ENCODE measurements at regions of chr2 and their contacts with region 1.

Region 1: GRCh38 chr2:191869178-191869577 is 22.3 kb upstream of the CAVIN2 start:
- DNase-seq: peak; percentile 75 to 76
- H3K4me3 ChIP-seq: no peak overlapping the region
- H3K27ac ChIP-seq: no peak overlapping the region
- H3K4me1 ChIP-seq: peaks cover 0 to 4% (median 0%) of the 10 kb centered on the region in 4 experiments; a peak in 1 of 7 replicates
- H3K27me3 ChIP-seq: no peaks in the 10 kb centered on the region
- CTCF ChIP-seq: peak; percentile 74 to 93 (median 81)
- EP300 ChIP-seq: no peak
- POLR2A ChIP-seq: no peak
- RAD21 ChIP-seq: peak; percentile 93 to 94

Region 2: GRCh38 chr2:191441496-191442214 is 427.5 kb before region 1 on chr2:
- CTCF ChIA-PET with region 1: no interaction called
- POLR2A ChIA-PET with region 1: no interaction called
- DNase-seq: no peak
- H3K4me3 ChIP-seq: no peak overlapping the region
- H3K27ac ChIP-seq: no peak overlapping the region
- H3K4me1 ChIP-seq: no peaks in the 10 kb centered on the region
- H3K27me3 ChIP-seq: no peaks in the 10 kb centered on the region
- CTCF ChIP-seq: no peak
- EP300 ChIP-seq: no peak
- POLR2A ChIP-seq: no peak
- RAD21 ChIP-seq: no peak

Region 3: DNA sequence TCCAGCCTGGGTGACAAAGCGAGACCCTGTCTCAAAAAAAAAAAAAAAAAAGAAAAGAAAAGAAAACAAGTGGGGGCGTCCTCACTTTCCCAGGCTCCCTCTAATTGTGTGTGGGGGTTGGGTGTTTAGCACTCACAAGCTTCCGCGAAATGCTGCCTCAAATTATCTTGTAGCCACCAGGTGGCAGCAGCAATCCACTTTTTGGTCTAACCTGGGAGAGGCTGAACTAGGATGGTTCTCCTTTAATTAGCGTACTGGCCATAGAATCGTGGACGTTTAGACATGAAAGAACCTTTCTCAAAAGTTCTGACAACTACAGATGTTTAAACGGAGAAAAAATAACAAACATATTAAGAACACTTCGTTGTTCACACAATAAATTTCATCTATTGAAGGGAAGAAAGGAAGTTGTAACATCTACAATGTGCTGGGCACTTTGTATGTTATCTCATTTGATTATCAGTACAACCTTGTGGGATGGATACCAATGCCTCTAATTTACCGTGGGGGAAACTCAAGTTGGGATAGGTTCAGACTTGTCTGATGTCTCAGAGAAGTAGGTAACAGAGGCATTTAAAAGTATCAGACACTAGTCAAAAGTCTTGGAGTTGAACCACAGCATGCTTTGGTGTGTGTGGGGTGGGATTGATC is 314.0 kb before region 1 on chr2:
- CTCF ChIA-PET with region 1: interaction called, 12 read pairs
- POLR2A ChIA-PET with region 1: no interaction called
- DNase-seq: peak; percentile 44 to 91
- H3K4me3 ChIP-seq: no peak overlapping the region
- H3K27ac ChIP-seq: no peak overlapping the region
- H3K4me1 ChIP-seq: no peaks in the 10 kb centered on the region
- H3K27me3 ChIP-seq: no peaks in the 10 kb centered on the region
- CTCF ChIP-seq: peak; percentile 61 to 78 (median 78)
- EP300 ChIP-seq: no peak
- POLR2A ChIP-seq: no peak
- RAD21 ChIP-seq: peak; percentile 88 to 90

Region 4: GRCh38 chr2:191800874-191801273 is 68.3 kb before region 1 on chr2:
- CTCF ChIA-PET with region 1: no interaction called
- POLR2A ChIA-PET with region 1: no interaction called
- DNase-seq: no peak
- H3K4me3 ChIP-seq: no peak overlapping the region
- H3K27ac ChIP-seq: no peak overlapping the region
- H3K4me1 ChIP-seq: no peaks in the 10 kb centered on the region
- H3K27me3 ChIP-seq: no peaks in the 10 kb centered on the region
- CTCF ChIP-seq: no peak
- EP300 ChIP-seq: no peak
- POLR2A ChIP-seq: no peak
- RAD21 ChIP-seq: no peak

Region 5: DNA sequence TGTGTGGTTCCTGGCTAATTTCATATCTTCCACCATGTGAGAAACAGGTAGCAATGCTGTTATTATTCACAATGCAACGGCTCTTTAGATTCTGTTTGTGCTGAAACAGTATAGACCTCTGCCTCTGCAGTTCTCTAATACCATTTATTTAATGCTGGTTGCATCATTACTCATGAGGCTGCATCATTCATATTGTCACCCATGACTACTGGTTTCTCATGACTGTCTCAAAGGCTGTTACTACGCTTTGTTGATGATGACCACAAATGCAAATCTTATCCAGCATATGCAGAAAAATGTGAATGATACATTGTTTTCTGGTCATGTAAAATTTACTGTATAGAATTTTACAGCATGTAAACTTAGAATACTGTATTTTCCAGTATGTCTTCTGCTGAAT is 44.8 kb before region 1 on chr2:
- CTCF ChIA-PET with region 1: interaction called, 20 read pairs
- POLR2A ChIA-PET with region 1: no interaction called
- DNase-seq: no peak
- H3K4me3 ChIP-seq: no peak overlapping the region
- H3K27ac ChIP-seq: no peak overlapping the region
- H3K4me1 ChIP-seq: no peaks in the 10 kb centered on the region
- H3K27me3 ChIP-seq: no peaks in the 10 kb centered on the region
- CTCF ChIP-seq: no peak
- EP300 ChIP-seq: no peak
- POLR2A ChIP-seq: no peak
- RAD21 ChIP-seq: no peak

Region 6: GRCh38 chr2:191836853-191837769 is 32.1 kb before region 1 on chr2:
- CTCF ChIA-PET with region 1: interaction called, 24 read pairs
- POLR2A ChIA-PET with region 1: no interaction called
- DNase-seq: no peak
- H3K4me3 ChIP-seq: no peak overlapping the region
- H3K27ac ChIP-seq: no peak overlapping the region
- H3K4me1 ChIP-seq: peaks cover 0 to 3% (median 0%) of the 10 kb centered on the region in 4 experiments; a peak in 1 of 7 replicates
- H3K27me3 ChIP-seq: no peaks in the 10 kb centered on the region
- CTCF ChIP-seq: no peak
- EP300 ChIP-seq: no peak
- POLR2A ChIP-seq: no peak
- RAD21 ChIP-seq: no peak

Region 7: DNA sequence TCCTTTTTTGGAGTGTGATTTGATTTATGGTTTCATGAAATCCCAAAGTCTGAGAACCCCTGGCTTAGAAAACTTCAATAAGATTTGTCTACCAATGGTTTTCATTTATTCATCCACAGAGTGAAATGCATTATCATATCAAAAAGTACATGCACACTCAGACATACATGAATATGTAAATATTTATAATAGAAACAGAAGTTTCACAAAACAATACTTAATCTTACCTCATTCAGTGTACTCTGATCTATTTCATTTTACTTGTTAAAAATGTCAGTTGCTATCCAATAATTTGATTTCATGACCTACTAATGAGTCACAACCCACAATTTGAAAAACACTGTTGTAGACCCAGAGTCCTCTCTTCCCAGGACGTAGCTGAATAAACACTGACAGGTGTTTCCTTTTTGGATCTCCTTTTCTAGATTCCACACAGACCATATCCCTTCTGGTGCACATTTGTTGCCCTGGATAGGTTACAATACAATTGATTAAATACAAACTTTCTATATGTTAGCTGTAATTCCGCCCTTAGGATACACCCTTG is 11.8 kb before region 1 on chr2:
- CTCF ChIA-PET with region 1: interaction called, 31 read pairs
- POLR2A ChIA-PET with region 1: no interaction called
- DNase-seq: no peak
- H3K4me3 ChIP-seq: no peak overlapping the region
- H3K27ac ChIP-seq: no peak overlapping the region
- H3K4me1 ChIP-seq: no peaks in the 10 kb centered on the region; a peak in 1 of 7 replicates
- H3K27me3 ChIP-seq: no peaks in the 10 kb centered on the region
- CTCF ChIP-seq: no peak
- EP300 ChIP-seq: no peak
- POLR2A ChIP-seq: no peak
- RAD21 ChIP-seq: no peak

Region 8: GRCh38 chr2:191950132-191950874 is 81.1 kb after region 1 on chr2:
- CTCF ChIA-PET with region 1: interaction called, 15 read pairs
- POLR2A ChIA-PET with region 1: no interaction called
- DNase-seq: no peak
- H3K4me3 ChIP-seq: no peak overlapping the region
- H3K27ac ChIP-seq: no peak overlapping the region
- H3K4me1 ChIP-seq: no peaks in the 10 kb centered on the region
- H3K27me3 ChIP-seq: no peaks in the 10 kb centered on the region
- CTCF ChIP-seq: no peak
- EP300 ChIP-seq: no peak
- POLR2A ChIP-seq: no peak
- RAD21 ChIP-seq: no peak

Region 9: GRCh38 chr2:192194866-192195547 is 325.8 kb after region 1 on chr2 and contains the start of gene TMEFF2:
- CTCF ChIA-PET with region 1: interaction called, 23 read pairs
- POLR2A ChIA-PET with region 1: no interaction called
- DNase-seq: peak; percentile 70 to 93
- H3K4me3 ChIP-seq: peak within 1 kb of the TSS; percentile 46 to 80 (median 68)
- H3K27ac ChIP-seq: no peak within 1 kb of the TSS
- H3K4me1 ChIP-seq: peaks cover 0 to 10% (median 5%) of the 10 kb centered on the region in 4 experiments; a peak in 5 of 7 replicates
- H3K27me3 ChIP-seq: peaks cover 18 to 53% (median 41%) of the 10 kb centered on the region in 4 experiments
- CTCF ChIP-seq: peak; percentile 12 to 41 (median 36); a peak in 3 of 4 replicates
- EP300 ChIP-seq: no peak
- POLR2A ChIP-seq: no peak
- RAD21 ChIP-seq: no peak
- total RNA-seq, gene TMEFF2: 1.5 and 3.7 TPM in 2 replicates